Posterior vena cava (tissue), 2 donors: ENCODE measurements at regions of chr4 and their contacts with region 1.

Region 1: GRCh38 chr4:155953151-155954114 is at the start of gene CTSO:
- DNase-seq: peak; percentile 92
- total RNA-seq, gene CTSO: 15.0 to 23.8 TPM

Region 2: GRCh38 chr4:155442267-155443105 is 510.9 kb before region 1 on chr4:
- intact Hi-C with region 1: loop called in 1 of 2 experiments (anchors 5 kb)
- DNase-seq: peak; percentile 95

Region 3: DNA sequence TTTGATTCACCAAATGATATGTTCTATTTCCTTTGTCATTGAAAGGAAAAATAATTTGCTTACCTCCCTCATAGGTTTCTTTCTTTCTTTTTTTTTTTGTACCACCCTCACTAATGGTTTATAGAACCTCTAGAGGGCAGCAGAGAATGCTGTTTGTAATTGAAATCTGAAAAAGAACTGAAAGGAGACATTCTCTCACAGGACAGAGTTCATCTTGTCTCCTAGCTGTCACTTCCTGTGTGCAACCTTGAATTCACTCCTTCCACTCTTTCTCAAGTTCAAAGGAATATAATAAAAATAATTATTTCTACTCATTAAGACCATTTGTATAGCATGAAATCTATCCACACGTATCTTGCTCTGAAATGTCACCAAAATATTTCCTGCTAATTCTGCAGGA is 143.6 kb before region 1 on chr4:
- intact Hi-C with region 1: loop called in 1 of 2 experiments (anchors 10 kb)
- DNase-seq: no peak